ENCODE measurements at regions of chr14 and their contacts with region 1.

Region 1: DNA sequence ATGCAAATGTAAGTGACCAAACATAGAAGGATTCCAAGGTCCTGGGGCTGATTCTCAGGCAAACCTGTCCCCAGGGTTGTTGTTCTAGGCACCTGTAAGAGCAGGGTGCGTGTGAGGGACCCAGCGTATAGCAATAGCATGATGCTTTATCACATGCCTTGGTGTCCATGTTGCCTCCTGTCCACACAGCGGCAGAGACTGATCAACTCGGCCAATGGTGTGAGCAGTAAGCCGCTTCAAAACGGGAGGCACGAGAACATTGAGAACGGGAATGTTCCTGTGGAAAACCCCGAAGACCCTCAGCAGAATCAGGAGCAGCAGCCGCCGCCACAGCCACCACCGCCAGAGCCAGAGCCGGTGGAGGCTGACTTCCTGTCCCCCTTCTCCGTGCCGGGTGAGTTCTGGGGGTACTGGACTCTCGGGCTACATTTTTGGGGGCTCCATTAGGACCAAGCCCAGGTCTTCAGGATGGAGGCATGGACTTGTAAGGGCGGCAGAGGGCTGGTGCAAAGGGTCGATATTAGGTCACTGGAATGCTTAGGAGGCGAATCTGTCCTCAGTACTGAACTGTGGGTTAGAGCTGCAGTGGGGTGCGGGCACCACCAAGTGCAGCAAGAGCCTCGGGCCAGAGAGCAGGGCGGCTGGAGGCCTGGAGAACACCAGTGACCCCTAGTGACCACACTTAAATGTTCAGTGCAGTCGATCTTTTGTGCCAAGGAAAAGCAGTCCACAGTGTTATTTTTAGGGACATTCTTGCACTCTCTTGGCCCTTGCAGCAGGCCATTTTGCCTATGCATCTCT is 57.2 kb upstream of the RIN3 start:
- DNase-seq: peak; percentile 59
- ATAC-seq: peak; percentile 88
- H3K4me3 ChIP-seq: no peak overlapping the region
- H3K27ac ChIP-seq: no peak overlapping the region
- H3K4me1 ChIP-seq: 0 out of 2 replicates have a peak, but pooled peaks cover 5% of the 10 kb centered on the region
- H3K27me3 ChIP-seq: peaks cover 10 to 58% of the 10 kb centered on the region in 2 experiments
- CTCF ChIP-seq: peak; percentile 90
- EP300 ChIP-seq: no peak
- POLR2A ChIP-seq: no peak
- RAD21 ChIP-seq: peak; percentile 77

Region 2: GRCh38 chr14:92135267-92135666 is 321.1 kb before region 1 on chr14:
- CTCF ChIA-PET with region 1: interaction called, 9 read pairs
- POLR2A ChIA-PET with region 1: no interaction called
- in situ Hi-C with region 1: loop called (anchors 10 kb)
- intact Hi-C with region 1: loop called (anchors 5 kb)
- DNase-seq: peak; percentile 31
- ATAC-seq: no peak
- H3K4me3 ChIP-seq: no peak overlapping the region
- H3K27ac ChIP-seq: no peak overlapping the region
- H3K4me1 ChIP-seq: no peaks in the 10 kb centered on the region
- H3K27me3 ChIP-seq: no peaks in the 10 kb centered on the region
- CTCF ChIP-seq: no peak; the same call in 1 of the 2 replicates
- EP300 ChIP-seq: no peak
- POLR2A ChIP-seq: no peak
- RAD21 ChIP-seq: no peak; the same call in 1 of the 2 replicates